CD4-positive, alpha-beta memory T cell (primary cell): ENCODE measurements at regions of chr6 and their contacts with region 1.

Region 1: DNA sequence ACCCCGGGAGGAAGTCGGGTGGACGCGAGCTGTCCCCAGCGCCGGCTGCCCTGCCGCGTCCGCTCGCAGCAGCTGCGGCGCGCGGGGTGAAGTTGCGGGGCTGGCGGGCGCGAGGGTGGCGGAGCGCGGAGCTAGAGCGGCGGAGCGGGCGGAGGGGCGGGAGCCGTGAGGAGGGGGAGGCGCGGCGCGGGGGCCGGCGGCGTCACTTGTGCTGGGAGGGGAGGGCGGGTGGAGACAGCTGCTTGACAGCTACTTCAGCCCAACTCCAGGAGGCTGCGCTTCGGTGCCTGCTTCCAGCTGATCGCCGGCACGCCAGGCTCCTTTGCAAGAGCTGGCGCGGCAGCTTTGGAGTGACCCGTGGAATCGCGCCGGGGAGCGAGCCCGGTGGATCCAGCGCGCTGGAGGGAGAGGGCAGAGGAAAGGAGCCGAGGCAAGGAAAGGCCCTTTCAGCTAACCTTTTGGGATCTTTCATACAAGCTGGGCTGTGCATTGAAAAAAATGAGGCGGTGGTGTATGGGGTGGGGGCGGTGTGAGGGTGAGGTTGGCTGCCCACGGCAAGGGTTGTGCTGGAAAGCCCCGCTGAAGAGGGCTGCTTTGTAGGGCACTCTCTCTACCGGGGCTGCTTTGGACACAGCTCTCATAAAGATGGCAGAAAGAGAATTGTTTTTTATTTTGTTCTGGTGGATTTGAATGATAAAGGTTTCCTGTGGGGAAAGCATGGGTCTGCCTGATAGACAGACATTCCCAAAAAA is 24.6 kb downstream of the RIPOR2 start:
- DNase-seq: peak in 3 of 5 donors; percentile 41 to 65 (median 44)
- H3K4me3 ChIP-seq: peak overlapping the region; percentile 1 to 54
- H3K4me3 Mint-ChIP-seq: peak overlapping the region; percentile 87 to 98 (median 93)
- H3K27ac ChIP-seq: peak overlapping the region; percentile 70
- H3K27ac Mint-ChIP-seq: peak overlapping the region; percentile 87 to 99 (median 96)
- H3K4me1 ChIP-seq: peaks cover 94% of the 10 kb centered on the region
- H3K4me1 Mint-ChIP-seq: peaks cover 83 to 99% (median 91%) of the 10 kb centered on the region in 4 donors
- H3K27me3 ChIP-seq: no peaks in the 10 kb centered on the region
- H3K27me3 Mint-ChIP-seq: no peaks in the 10 kb centered on the region

Region 2: GRCh38 chr6:24855395-24856245 is 55.5 kb before region 1 on chr6:
- CTCF ChIA-PET with region 1: interaction called, 8 read pairs
- POLR2A ChIA-PET with region 1: interaction called, 38 read pairs
- intact Hi-C with region 1: no loop called
- DNase-seq: peak; percentile 76 to 82 (median 77)
- H3K4me3 ChIP-seq: no peak overlapping the region
- H3K4me3 Mint-ChIP-seq: peak overlapping the region in 5 of 8 donors; percentile 1 to 87 (median 26)
- H3K27ac ChIP-seq: peak overlapping the region; percentile 61
- H3K27ac Mint-ChIP-seq: peak overlapping the region; percentile 82 to 92 (median 90)
- H3K4me1 ChIP-seq: peaks cover 53% of the 10 kb centered on the region
- H3K4me1 Mint-ChIP-seq: peaks cover 48 to 58% (median 50%) of the 10 kb centered on the region in 4 donors
- H3K27me3 ChIP-seq: no peaks in the 10 kb centered on the region
- H3K27me3 Mint-ChIP-seq: no peaks in the 10 kb centered on the region

Region 3: DNA sequence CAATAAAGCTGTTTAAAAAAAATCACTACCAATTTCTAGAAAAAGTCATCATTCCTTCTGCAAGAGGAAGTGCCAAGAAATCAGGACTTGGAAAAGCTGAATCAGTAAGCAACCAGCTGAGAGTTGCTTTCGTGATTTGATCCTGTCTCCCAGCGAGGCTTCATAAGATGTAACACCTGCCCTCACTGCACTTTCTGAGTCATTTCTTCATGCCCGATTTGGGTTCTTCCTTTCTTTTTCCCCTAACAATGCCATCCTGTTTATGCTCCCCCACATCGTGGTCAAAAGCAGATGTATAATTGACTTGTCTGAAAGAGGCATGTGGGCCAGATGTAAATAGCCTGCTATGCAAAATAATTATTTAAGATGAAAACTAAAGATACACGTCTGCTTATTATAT is 27.5 kb before region 1 on chr6:
- CTCF ChIA-PET with region 1: interaction called, 12 read pairs
- POLR2A ChIA-PET with region 1: interaction called, 13 read pairs
- intact Hi-C with region 1: no loop called
- DNase-seq: peak in 1 of 5 donors; percentile 64
- H3K4me3 ChIP-seq: no peak overlapping the region
- H3K4me3 Mint-ChIP-seq: peak overlapping the region in 6 of 8 donors; percentile 28 to 80 (median 68)
- H3K27ac ChIP-seq: peak overlapping the region; percentile 42
- H3K27ac Mint-ChIP-seq: peak overlapping the region; percentile 49 to 94 (median 88)
- H3K4me1 ChIP-seq: peaks cover 96% of the 10 kb centered on the region
- H3K4me1 Mint-ChIP-seq: peaks cover 59 to 97% (median 80%) of the 10 kb centered on the region in 4 donors
- H3K27me3 ChIP-seq: no peaks in the 10 kb centered on the region
- H3K27me3 Mint-ChIP-seq: no peaks in the 10 kb centered on the region

Region 4: DNA sequence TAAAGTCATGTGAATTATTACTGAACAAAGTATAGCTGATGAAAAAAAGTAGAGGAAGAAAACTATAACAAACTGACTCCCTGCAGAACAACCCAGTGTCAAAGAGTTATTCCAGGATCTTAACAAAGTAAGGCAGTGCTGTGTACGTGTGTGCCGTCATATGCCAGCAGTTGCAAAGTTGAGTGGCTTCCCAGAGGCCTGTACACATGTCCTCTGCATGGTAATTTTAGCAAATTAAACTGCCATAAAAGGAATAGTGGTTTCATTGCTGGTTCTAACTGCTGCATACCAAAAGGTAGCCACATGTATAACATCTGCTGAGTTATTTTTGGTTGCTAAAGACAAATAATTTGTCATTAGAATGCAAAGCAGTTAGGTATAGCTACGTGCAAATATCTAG is 20.1 kb before region 1 on chr6:
- CTCF ChIA-PET with region 1: interaction called, 12 read pairs
- POLR2A ChIA-PET with region 1: interaction called, 6 read pairs
- intact Hi-C with region 1: no loop called
- DNase-seq: no peak
- H3K4me3 ChIP-seq: no peak overlapping the region
- H3K4me3 Mint-ChIP-seq: peak overlapping the region in 7 of 8 donors; percentile 17 to 66 (median 22)
- H3K27ac ChIP-seq: no peak overlapping the region
- H3K27ac Mint-ChIP-seq: peak overlapping the region; percentile 7 to 85 (median 77)
- H3K4me1 ChIP-seq: peaks cover 92% of the 10 kb centered on the region
- H3K4me1 Mint-ChIP-seq: peaks cover 72 to 94% (median 83%) of the 10 kb centered on the region in 4 donors
- H3K27me3 ChIP-seq: no peaks in the 10 kb centered on the region
- H3K27me3 Mint-ChIP-seq: no peaks in the 10 kb centered on the region

Region 5: DNA sequence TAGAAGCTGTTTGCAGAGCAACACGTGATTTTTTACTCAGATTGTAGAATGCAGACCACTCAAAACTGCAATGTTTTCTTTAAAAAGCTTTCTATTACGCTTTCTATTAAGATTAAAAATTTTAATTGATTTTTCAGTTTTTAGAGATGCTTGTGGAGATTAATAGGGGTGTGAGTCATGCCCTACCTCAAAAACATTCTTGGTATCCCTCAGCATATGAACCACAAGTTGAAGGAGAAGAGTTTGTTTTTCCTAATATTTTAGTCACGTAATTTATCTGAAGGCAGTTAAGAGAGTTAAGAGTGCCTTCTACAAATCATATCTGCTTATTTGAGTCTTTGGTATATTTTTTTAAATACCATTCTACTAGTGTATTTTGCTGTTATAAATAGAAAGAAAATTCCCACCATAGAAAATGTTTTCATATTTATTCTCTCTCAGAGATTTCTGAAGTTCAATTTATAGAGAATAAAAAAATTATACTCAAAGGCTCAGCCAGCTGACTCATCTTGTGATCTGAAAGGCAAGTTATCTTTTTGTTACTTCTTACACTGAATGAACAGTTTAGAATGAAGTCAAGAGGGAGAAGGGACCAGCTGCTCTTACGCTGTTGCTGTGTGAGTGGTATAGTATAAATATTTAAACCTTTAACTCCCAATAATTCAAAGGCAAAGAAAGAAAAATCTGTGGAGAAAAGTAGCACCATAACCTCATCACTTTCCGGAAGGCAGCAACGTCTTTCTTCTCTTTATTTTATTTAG is 17.0 kb after region 1 on chr6:
- CTCF ChIA-PET with region 1: interaction called, 245 read pairs
- POLR2A ChIA-PET with region 1: interaction called, 734 read pairs
- intact Hi-C with region 1: loop called (anchors 1 kb)
- DNase-seq: no peak
- H3K4me3 ChIP-seq: peak overlapping the region; percentile 63 to 67
- H3K4me3 Mint-ChIP-seq: peak overlapping the region; percentile 96 to 100 (median 99)
- H3K27ac ChIP-seq: peak overlapping the region; percentile 53
- H3K27ac Mint-ChIP-seq: peak overlapping the region; percentile 78 to 97 (median 94)
- H3K4me1 ChIP-seq: peaks cover 86% of the 10 kb centered on the region
- H3K4me1 Mint-ChIP-seq: peaks cover 44 to 85% (median 66%) of the 10 kb centered on the region in 4 donors
- H3K27me3 ChIP-seq: no peaks in the 10 kb centered on the region
- H3K27me3 Mint-ChIP-seq: peaks cover 0 to 1% of the 10 kb centered on the region in 2 donors